Aorta (tissue), 5 donors: ENCODE measurements at regions of chr11 and their contacts with region 1.

Region 1: DNA sequence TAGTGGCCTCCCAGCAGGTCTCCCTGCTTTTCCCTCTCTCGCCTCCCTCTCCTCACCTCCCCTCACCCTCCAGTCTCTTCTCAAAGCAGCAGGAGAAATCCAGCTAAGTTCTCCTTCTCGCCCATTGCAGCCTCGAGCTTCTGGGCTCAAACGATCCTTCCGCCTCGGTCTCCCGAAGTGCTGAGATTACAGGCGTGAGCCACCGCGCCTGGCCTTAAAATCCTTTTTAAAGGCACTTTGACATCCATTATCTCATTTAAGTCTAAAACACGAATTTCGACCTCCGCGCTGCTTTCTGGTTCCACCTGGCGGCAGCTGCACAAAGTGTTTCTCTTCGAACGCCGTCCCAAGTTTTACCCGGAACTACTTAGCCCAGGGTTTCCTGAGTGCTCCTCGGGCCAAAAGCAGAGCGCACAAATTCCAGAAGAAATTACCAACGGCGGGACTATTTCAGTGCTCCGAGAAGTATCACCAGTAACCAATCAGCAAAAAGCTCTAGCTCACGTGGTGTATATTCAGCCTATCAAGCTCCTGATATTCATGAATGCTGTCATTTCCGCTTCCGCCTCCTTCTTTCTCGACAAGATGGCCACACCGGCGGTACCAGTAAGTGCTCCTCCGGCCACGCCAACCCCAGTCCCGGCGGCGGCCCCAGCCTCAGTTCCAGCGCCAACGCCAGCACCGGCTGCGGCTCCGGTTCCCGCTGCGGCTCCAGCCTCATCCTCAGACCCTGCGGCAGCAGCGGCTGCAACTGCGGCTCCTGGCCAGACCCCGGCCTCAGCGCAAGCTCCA is at the start of gene EIF3F:
- DNase-seq: peak; percentile 93
- ATAC-seq: peak; percentile 100
- H3K4me3 ChIP-seq: peak within 1 kb of the TSS; percentile 93 to 95
- H3K27ac ChIP-seq: peak within 1 kb of the TSS in 1 of 2 donors; percentile 96
- H3K4me1 ChIP-seq: no peaks in the 10 kb centered on the region
- H3K27me3 ChIP-seq: no peaks in the 10 kb centered on the region
- total RNA-seq, gene EIF3F: 156 to 183 TPM

Region 2: GRCh38 chr11:7436657-7437056 is 550.3 kb before region 1 on chr11:
- intact Hi-C with region 1: no loop called
- DNase-seq: peak in 1 of 2 donors; percentile 53
- ATAC-seq: no peak
- H3K4me3 ChIP-seq: no peak overlapping the region
- H3K27ac ChIP-seq: no peak overlapping the region
- H3K4me1 ChIP-seq: no peaks in the 10 kb centered on the region
- H3K27me3 ChIP-seq: no peaks in the 10 kb centered on the region

Region 3: DNA sequence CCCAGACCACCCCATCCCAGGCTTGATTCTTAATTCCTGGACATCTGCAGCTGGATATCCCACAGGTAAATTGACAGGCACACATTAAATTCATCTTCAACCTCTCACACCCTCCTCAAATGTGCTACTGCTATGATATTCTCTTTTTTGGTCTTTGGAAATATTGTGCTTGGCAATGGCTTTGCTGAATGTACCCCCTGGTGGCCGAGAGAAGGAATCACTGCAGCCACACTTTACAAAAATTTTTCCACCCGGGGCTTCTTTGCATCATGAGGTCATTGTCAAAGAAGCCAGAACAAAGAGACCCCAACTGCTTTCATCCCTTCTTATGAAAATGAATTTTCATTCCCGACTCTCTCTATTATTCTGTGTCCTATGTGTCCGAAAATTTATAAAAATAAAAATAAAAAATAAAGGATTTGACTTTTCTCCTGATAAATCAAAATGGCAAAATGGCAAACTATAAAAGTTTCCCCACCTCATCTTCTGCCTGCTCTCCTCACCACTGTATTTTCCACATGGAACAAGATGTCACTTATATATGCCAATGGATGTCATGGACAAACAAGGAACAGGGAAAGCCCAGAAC is 298.6 kb before region 1 on chr11:
- intact Hi-C with region 1: loop called in 1 of 2 experiments (anchors 10 kb)
- DNase-seq: no peak
- ATAC-seq: no peak
- H3K4me3 ChIP-seq: no peak overlapping the region
- H3K27ac ChIP-seq: no peak overlapping the region
- H3K4me1 ChIP-seq: peaks cover 0 to 3% of the 10 kb centered on the region in 2 donors
- H3K27me3 ChIP-seq: no peaks in the 10 kb centered on the region

Region 4: DNA sequence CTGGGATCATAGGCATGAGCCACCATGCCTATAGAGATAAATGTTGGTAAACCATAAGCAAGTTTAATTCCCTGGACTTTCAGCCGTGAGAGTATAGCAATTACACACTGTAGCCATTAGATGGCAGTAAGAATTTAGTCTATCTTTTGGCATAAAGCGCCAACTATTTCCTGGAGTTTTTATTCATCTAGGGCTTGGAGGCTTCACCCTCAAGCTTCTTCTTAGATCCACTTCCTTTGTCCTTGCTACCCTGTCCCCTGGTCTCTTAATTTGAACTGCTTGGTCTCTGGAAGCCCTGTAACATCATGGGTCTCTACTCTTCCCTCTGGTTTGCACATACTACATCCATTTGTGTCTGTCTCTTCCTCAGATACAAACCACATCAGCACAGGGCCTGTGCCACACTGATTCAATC is 94.1 kb before region 1 on chr11:
- intact Hi-C with region 1: loop called (anchors 1 to 5 kb)
- DNase-seq: no peak
- ATAC-seq: peak; percentile 70
- H3K4me3 ChIP-seq: no peak overlapping the region
- H3K27ac ChIP-seq: peak overlapping the region in 1 of 2 donors; percentile 45
- H3K4me1 ChIP-seq: no peaks in the 10 kb centered on the region
- H3K27me3 ChIP-seq: no peaks in the 10 kb centered on the region

Region 5: DNA sequence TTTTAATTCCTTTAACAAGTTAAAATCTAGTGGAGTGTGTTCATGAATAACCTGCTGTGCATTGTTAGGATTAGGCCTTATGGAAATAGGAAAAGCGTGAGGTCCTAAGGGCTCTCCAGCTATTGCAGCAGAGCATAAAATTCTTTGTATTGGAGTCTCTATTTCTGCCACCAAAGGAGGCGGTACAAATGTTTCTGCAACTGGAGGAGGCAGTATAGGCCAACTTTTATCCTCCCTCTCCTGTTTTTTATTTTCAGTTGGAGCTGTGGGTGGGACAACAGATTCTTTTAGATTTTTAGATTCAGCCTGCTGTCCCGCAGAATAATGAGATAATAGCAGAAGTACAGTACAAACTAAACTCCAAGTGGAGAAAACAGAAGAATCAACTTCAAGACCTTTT is 82.0 kb before region 1 on chr11:
- intact Hi-C with region 1: loop called in 1 of 2 experiments (anchors 2 kb)
- DNase-seq: no peak
- ATAC-seq: no peak
- H3K4me3 ChIP-seq: no peak overlapping the region
- H3K27ac ChIP-seq: peak overlapping the region in 1 of 2 donors; percentile 64
- H3K4me1 ChIP-seq: peaks cover 0 to 1% of the 10 kb centered on the region in 2 donors
- H3K27me3 ChIP-seq: no peaks in the 10 kb centered on the region

Region 6: DNA sequence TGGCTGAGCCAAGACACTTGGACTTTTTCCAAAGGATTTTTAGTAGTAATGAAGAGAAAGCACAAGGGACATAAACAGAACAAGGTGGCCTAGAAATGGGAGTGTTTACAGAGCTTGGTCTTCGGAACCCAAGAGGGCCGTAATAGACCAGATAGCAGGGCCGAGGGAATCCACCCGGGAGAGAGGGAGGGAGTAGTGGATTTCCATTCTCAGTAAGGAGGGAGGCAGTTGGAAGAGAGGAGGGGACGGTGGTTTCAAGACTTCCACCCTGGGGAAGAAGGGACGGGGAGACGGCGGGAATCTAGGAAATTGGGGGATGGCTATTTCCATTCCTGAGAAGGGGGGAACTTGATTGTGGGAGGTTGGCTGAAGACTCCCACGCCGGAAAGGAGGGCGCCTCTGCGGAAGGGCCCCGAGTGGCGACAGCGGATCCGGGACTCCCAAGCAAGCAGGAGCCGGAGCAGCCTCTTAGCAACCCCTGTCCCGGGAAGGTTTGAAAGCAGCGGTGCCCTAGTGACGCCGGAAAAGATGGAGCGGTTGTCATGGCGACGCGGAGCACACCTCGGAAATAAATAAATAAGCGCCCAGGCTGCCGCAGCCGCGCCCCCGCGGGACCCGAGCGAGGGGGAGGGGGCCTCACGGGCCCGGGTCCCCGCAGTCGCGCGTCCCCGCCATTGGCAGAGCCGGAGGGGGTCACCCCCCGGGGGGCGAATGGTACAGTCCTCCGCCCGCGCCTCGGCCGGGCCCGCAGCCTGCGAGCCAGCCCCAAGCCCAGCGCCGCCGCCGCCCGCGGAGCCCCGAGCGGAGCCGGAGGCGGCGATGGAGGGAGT is 31.7 kb after region 1 on chr11:
- intact Hi-C with region 1: loop called in 1 of 2 experiments (anchors 2 kb)
- DNase-seq: peak; percentile 83 to 92
- ATAC-seq: peak; percentile 80
- H3K4me3 ChIP-seq: peak overlapping the region; percentile 47 to 59
- H3K27ac ChIP-seq: no peak overlapping the region
- H3K4me1 ChIP-seq: no peaks in the 10 kb centered on the region
- H3K27me3 ChIP-seq: no peaks in the 10 kb centered on the region